ENCODE measurements at regions of chr14 and their contacts with region 1.

Region 1: DNA sequence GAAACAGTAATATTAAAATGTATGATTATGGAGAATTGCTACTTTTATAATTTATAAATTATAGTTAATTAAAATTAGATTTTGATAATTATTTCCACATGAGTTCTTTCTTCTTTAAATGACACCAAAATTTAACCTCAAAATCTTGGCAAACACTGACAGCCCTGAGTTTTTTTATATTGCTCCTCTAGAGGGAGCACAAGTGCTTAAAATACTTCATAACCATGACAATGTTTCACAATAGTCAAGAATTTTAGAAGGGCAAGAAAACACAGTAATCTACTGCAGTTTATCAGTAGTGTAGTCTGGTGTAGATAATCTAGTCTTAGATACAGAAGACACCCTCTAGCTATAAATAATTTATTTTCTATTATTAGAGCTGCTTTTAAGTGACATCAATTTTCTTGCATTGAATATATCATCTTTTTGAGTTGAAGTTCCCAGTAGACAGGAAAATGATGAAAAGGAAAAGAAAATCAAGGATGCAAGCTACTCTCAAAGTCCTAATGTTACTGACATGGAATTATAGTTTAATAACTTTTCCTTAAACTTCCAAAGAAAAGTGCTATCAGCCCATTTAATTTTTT is 14.3 kb upstream of the PTGER2 start:
- DNase-seq: no peak
- H3K4me3 ChIP-seq: no peak overlapping the region
- H3K27ac ChIP-seq: no peak overlapping the region
- H3K4me1 ChIP-seq: no peaks in the 10 kb centered on the region; a peak in 1 of 7 replicates
- H3K27me3 ChIP-seq: no peaks in the 10 kb centered on the region
- CTCF ChIP-seq: peak in 2 of 3 experiments; percentile 30 to 50; a peak in 2 of 4 replicates
- EP300 ChIP-seq: no peak
- POLR2A ChIP-seq: no peak
- RAD21 ChIP-seq: peak; percentile 70 to 73

Region 2: GRCh38 chr14:52333823-52334657 is 34.3 kb after region 1 on chr14:
- CTCF ChIA-PET with region 1: interaction called, 11 read pairs
- POLR2A ChIA-PET with region 1: no interaction called
- DNase-seq: no peak
- H3K4me3 ChIP-seq: no peak overlapping the region
- H3K27ac ChIP-seq: no peak overlapping the region
- H3K4me1 ChIP-seq: peaks cover 0 to 2% (median 0%) of the 10 kb centered on the region in 4 experiments; a peak in 1 of 7 replicates
- H3K27me3 ChIP-seq: peaks cover 0 to 1% (median 0%) of the 10 kb centered on the region in 4 experiments; a peak in 1 of 7 replicates
- CTCF ChIP-seq: no peak
- EP300 ChIP-seq: no peak
- POLR2A ChIP-seq: no peak
- RAD21 ChIP-seq: no peak

Measured in H1 (cell line).